HEK293T (cell line): ENCODE measurements at regions of chr6 and their contacts with region 1.

Region 1: GRCh38 chr6:41683510-41684310 is 45.4 kb downstream of the MDFI start:
- DNase-seq: peak; percentile 87

Region 2: DNA sequence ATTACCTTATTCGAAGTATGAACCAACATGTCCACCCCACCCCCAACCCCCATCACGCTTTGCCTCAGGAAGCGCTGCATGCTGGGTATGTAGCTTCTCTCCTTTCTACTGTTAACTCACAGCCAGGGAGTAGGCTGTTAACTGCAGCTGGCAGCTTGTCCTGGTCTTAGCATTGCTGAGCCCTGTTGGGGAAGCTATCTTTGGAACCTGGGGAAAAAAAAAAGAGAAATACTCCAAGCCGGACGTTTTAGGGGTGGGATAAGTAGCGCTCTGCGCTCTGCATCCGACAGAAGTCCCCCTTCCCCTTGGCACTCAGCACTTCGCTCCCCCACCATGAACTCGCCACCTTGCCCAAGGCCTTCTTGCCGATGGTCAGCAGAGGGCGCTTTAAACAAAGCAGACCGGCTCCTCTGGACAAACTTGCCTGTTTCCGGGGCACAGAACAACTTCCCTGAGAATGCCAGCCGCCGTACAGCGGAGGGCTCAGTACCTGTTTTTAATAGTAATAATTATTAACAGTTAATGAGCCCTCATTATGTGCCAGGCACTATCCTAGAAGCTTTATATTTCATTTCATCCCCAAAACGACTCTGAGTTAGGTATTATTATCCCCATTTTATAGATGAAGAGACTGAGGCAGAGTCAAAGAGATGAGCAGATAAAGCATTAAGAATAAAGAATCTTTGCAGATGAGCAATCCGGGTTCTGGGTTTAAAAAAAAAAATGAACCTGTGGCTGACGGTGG is 80.7 kb before region 1 on chr6:
- CTCF ChIA-PET with region 1: interaction called, 49 read pairs
- POLR2A ChIA-PET with region 1: interaction called, 6 read pairs
- DNase-seq: peak; percentile 86